Posterior vena cava (tissue), 2 donors: ENCODE measurements at regions of chr1 and their contacts with region 1.

Region 1: GRCh38 chr1:96520579-96520947 is 201.0 kb upstream of the PTBP2 start:
- DNase-seq: no peak

Region 2: DNA sequence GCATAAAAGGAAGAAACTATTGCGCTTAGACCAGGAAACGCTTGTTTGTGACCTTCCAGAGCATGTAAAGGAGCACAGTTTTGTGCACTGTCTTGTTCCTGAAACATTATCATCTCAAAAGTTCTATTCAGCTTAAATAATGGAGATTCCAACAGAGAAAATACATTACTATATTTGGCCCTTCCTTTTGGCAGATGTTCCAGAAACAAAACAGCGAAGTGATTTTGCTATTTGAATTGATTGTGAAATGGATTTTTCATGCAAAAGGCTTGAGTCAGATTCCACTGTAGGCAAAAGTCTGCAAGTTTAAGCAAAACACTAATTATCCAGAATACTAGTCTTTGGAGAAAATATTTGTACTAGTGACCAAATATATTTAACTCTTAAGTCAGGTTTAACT is 120.7 kb after region 1 on chr1:
- intact Hi-C with region 1: no loop called
- DNase-seq: no peak

Region 3: GRCh38 chr1:98147280-98147679 is 1626.7 kb after region 1 on chr1:
- intact Hi-C with region 1: loop called in 1 of 2 experiments (anchors 5 kb)
- DNase-seq: no peak